CD8-positive, alpha-beta memory T cell (primary cell): ENCODE measurements at regions of chr1 and their contacts with region 1.

Region 1: DNA sequence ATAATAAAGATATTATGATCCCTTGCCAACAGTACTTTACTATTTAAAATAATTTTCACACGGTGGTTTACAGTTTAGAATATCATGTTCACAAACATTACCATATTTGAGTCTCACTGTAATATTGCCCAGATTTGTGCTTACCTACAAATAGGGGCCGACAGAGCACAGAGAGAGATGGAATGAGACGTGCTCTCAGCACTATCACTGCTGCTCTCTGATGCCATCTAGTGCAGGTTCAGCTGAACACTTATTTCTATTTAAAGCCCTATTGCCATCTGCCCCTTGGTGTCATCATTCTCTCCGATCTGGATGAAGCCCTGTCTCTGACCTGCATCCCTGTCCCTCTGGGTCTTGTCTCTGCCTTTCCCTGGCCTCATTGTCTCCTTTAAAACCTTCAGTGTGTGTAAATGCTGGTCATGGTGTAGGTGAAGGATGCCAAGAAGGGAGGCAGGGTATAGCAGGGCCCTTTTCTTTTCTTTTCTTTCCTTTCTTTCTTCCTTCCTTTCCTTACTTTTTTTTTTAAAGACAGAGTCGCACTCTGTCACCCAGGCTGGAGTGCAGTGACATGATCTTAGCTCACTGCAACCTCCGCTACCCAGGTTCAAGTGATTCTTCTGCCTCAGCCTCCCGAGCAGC is 6.9 kb upstream of the GPATCH4 start:
- DNase-seq: peak; percentile 32 to 73 (median 62)
- H3K4me3 ChIP-seq: no peak overlapping the region
- H3K4me3 Mint-ChIP-seq: peak overlapping the region in 2 of 7 donors; percentile 25 to 41
- H3K27ac ChIP-seq: no peak overlapping the region
- H3K27ac Mint-ChIP-seq: no peak overlapping the region
- H3K4me1 ChIP-seq: peaks cover 10% of the 10 kb centered on the region
- H3K4me1 Mint-ChIP-seq: peaks cover 6 to 15% (median 9%) of the 10 kb centered on the region in 3 donors
- H3K27me3 ChIP-seq: no peaks in the 10 kb centered on the region
- H3K27me3 Mint-ChIP-seq: peaks cover 5 to 26% of the 10 kb centered on the region in 2 donors

Region 2: GRCh38 chr1:156584813-156585212 is 23.3 kb before region 1 on chr1:
- CTCF ChIA-PET with region 1: interaction called, 10 read pairs
- POLR2A ChIA-PET with region 1: interaction called, 10 read pairs
- DNase-seq: no peak
- H3K4me3 ChIP-seq: no peak overlapping the region
- H3K4me3 Mint-ChIP-seq: peak overlapping the region in 1 of 7 donors; percentile 46
- H3K27ac ChIP-seq: no peak overlapping the region
- H3K27ac Mint-ChIP-seq: no peak overlapping the region
- H3K4me1 ChIP-seq: peaks cover 30% of the 10 kb centered on the region
- H3K4me1 Mint-ChIP-seq: peaks cover 27 to 38% (median 33%) of the 10 kb centered on the region in 3 donors
- H3K27me3 ChIP-seq: no peaks in the 10 kb centered on the region
- H3K27me3 Mint-ChIP-seq: peaks cover 0 to 1% of the 10 kb centered on the region in 2 donors

Region 3: GRCh38 chr1:156591432-156592157 is 16.6 kb before region 1 on chr1 and contains the start of gene NAXE:
- CTCF ChIA-PET with region 1: interaction called, 15 read pairs
- POLR2A ChIA-PET with region 1: interaction called, 10 read pairs
- DNase-seq: peak; percentile 64 to 78 (median 70)
- H3K4me3 ChIP-seq: peak within 1 kb of the TSS; percentile 70
- H3K4me3 Mint-ChIP-seq: peak within 1 kb of the TSS; percentile 89 to 94 (median 91)
- H3K27ac ChIP-seq: peak within 1 kb of the TSS; percentile 67
- H3K27ac Mint-ChIP-seq: peak within 1 kb of the TSS; percentile 90 to 98 (median 96)
- H3K4me1 ChIP-seq: peaks cover 20% of the 10 kb centered on the region
- H3K4me1 Mint-ChIP-seq: peaks cover 20 to 24% (median 21%) of the 10 kb centered on the region in 3 donors
- H3K27me3 ChIP-seq: no peaks in the 10 kb centered on the region
- H3K27me3 Mint-ChIP-seq: no peaks in the 10 kb centered on the region
- total RNA-seq, gene NAXE: 63.0 to 69.1 TPM

Region 4: DNA sequence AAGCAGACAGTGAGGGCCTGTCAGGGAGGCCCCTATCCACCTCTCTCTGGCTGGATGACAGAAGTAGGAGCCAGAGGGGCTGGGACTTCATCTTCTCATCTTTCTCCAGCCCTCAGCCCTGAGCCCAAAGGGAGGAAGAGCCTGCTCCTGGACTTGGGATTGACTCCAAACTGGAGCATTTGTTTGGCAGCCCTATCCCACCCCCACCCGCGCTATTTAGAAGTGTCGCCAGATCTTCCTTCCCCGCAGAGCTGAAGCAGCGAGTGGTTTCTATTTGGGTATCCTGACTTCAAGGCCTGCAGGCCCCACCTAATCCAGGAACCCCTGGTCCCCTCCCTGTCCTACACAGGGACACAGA is 59.4 kb after region 1 on chr1:
- CTCF ChIA-PET with region 1: no interaction called
- POLR2A ChIA-PET with region 1: no interaction called
- DNase-seq: no peak
- H3K4me3 ChIP-seq: no peak overlapping the region
- H3K4me3 Mint-ChIP-seq: no peak overlapping the region
- H3K27ac ChIP-seq: no peak overlapping the region
- H3K27ac Mint-ChIP-seq: no peak overlapping the region
- H3K4me1 ChIP-seq: no peaks in the 10 kb centered on the region
- H3K4me1 Mint-ChIP-seq: no peaks in the 10 kb centered on the region
- H3K27me3 ChIP-seq: no peaks in the 10 kb centered on the region
- H3K27me3 Mint-ChIP-seq: peaks cover 9 to 10% of the 10 kb centered on the region in 2 donors